Endothelial cell of umbilical vein (primary cell): ENCODE measurements at regions of chr10 and their contacts with region 1.

Region 1: DNA sequence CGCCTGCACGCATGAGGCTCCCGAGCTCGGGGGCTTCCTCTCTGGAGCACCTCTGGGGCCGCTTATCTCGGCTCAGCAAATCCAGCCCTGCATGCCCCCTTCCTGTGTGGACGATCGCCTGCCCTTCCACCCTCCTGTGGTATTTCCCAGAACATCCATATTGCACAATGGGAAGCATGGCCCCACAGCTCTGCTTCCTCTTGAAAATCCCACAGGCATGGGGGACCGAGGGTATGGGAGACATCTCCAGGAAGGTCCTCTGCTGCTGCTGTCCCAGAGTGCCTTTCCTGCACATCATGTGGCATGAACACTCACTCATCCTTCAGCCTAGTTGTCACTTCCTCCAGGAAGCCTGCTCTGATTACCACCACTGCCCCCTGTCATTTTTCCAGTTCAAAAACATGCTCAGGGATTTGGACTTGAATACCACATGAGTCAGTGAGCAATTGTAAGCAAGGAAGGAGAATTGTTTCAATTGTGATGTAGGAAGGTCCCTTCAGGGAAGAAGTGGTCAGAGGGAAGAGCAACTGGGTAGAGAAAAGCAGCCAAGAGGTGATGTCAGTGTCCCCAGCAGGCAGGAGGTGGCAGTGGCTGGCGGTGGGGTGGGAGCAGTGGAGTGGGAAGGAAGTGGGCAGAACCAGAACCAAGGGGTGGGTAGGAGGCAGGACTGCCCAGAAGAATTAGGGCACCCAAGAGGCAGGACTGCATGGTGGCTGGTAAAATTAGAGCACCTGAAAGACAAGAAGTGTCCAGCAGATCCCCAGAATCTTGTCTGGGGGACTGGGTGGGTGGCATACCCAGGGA is 67.5 kb upstream of the ZMIZ1 start:
- DNase-seq: peak; percentile 83
- H3K4me3 ChIP-seq: no peak overlapping the region
- H3K27ac ChIP-seq: no peak overlapping the region
- H3K4me1 ChIP-seq: peaks cover 9% of the 10 kb centered on the region
- H3K27me3 ChIP-seq: no peaks in the 10 kb centered on the region
- CTCF ChIP-seq: peak in 1 of 2 donors; percentile 6
- POLR2A ChIP-seq: no peak

Region 2: GRCh38 chr10:78543749-78544362 is 457.4 kb before region 1 on chr10:
- CTCF ChIA-PET with region 1: no interaction called
- POLR2A ChIA-PET with region 1: no interaction called
- dilution Hi-C with region 1: no loop called
- intact Hi-C with region 1: no loop called
- DNase-seq: no peak
- H3K4me3 ChIP-seq: no peak overlapping the region
- H3K27ac ChIP-seq: no peak overlapping the region
- H3K4me1 ChIP-seq: no peaks in the 10 kb centered on the region
- H3K27me3 ChIP-seq: peaks cover 5 to 12% of the 10 kb centered on the region in 2 experiments
- CTCF ChIP-seq: no peak
- POLR2A ChIP-seq: no peak

Region 3: DNA sequence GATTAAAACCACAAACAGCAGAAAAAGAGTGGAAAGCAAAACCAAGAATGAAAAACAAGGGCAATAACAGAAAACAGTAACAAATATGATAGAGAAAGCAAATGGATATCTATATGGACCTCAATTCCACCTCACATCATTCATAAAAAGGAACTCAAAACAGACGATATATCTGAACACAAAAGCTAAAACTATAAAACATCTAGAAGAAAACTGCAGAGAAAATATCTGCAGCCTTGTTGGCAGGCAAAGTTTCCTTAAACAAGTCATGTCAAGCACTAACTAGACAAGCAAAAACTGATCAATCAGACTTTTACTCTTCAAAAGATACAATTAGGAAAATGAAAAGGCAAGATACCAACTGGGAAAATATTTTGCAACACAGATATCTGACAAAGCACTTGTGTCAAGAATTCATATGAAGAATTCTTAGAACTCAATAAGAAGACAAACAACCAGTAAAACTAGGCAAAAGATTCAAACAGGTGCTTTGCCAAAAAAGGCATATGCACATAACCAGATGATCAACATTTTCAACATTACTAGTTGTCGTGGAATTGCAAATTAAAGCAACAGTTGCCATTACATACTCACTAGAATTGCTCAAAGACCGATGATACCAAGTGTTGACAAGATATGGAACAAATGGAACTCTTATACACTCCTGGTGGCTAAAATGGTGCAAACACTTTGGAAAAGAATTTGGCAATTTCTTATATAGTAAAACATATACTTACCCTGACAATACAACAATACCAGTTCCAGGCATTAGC is 41.5 kb after region 1 on chr10:
- CTCF ChIA-PET with region 1: no interaction called
- POLR2A ChIA-PET with region 1: no interaction called
- dilution Hi-C with region 1: no loop called
- intact Hi-C with region 1: loop called (anchors 2 kb)
- DNase-seq: no peak
- H3K4me3 ChIP-seq: no peak overlapping the region
- H3K27ac ChIP-seq: no peak overlapping the region
- H3K4me1 ChIP-seq: no peaks in the 10 kb centered on the region
- H3K27me3 ChIP-seq: peaks cover 18 to 32% of the 10 kb centered on the region in 2 experiments
- CTCF ChIP-seq: no peak
- POLR2A ChIP-seq: no peak